Esophagus muscularis mucosa (tissue), 4 donors: ENCODE measurements at regions of chr1 and their contacts with region 1.

Region 1: GRCh38 chr1:111789666-111790316 is 34.1 kb downstream of the DDX20 start:
- DNase-seq: no peak
- H3K4me3 ChIP-seq: no peak overlapping the region
- H3K27ac ChIP-seq: peak overlapping the region in 1 of 4 donors; percentile 28
- H3K4me1 ChIP-seq: peaks cover 0 to 14% (median 7%) of the 10 kb centered on the region in 4 donors
- H3K27me3 ChIP-seq: no peaks in the 10 kb centered on the region
- CTCF ChIP-seq: peak; percentile 31 to 42 (median 34)
- EP300 ChIP-seq: no peak
- POLR2A ChIP-seq: no peak

Region 2: DNA sequence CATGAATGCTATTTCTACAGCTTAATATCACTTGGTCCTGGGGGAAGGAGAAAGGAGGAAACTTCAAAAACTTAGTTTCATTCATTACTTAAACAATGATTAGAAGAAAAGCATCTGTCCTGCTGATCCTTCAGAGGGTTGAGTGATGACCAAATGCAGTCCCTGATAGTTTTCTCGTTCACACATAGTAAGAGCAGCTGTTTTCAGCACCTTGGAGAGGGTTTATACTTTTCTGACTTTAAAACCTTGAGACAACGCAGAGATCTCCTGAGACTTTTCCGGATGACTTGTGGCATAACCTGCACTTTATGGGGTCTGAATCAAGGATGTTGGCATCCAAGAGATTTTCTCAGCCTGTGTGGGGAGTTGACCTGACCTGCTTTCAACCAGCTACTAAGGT is 293.7 kb after region 1 on chr1:
- intact Hi-C with region 1: no loop called
- DNase-seq: no peak
- H3K4me3 ChIP-seq: no peak overlapping the region
- H3K27ac ChIP-seq: no peak overlapping the region
- H3K4me1 ChIP-seq: no peaks in the 10 kb centered on the region
- H3K27me3 ChIP-seq: no peaks in the 10 kb centered on the region
- CTCF ChIP-seq: no peak
- EP300 ChIP-seq: no peak
- POLR2A ChIP-seq: no peak

Region 3: GRCh38 chr1:112369392-112370285 is 579.8 kb after region 1 on chr1:
- intact Hi-C with region 1: loop called (anchors 10 kb)
- DNase-seq: peak; percentile 95
- H3K4me3 ChIP-seq: peak overlapping the region in 1 of 4 donors; percentile 40
- H3K27ac ChIP-seq: no peak overlapping the region
- H3K4me1 ChIP-seq: peaks cover 5 to 6% (median 5%) of the 10 kb centered on the region in 4 donors
- H3K27me3 ChIP-seq: peaks cover 0 to 6% (median 0%) of the 10 kb centered on the region in 4 donors
- CTCF ChIP-seq: peak in 2 of 3 experiments; percentile 96 to 98
- EP300 ChIP-seq: no peak
- POLR2A ChIP-seq: no peak